ENCODE measurements at regions of chr10 and their contacts with region 1.

Region 1: GRCh38 chr10:72297968-72298773 is 24.4 kb downstream of the DDIT4 start:
- DNase-seq: peak; percentile 92
- H3K4me3 Mint-ChIP-seq: peak overlapping the region; percentile 78
- H3K27ac Mint-ChIP-seq: peak overlapping the region; percentile 100
- H3K4me1 Mint-ChIP-seq: peaks cover 54% of the 10 kb centered on the region
- H3K27me3 Mint-ChIP-seq: no peaks in the 10 kb centered on the region

Region 2: GRCh38 chr10:72162978-72163377 is 135.2 kb before region 1 on chr10:
- intact Hi-C with region 1: loop called (anchors 1 kb)
- DNase-seq: no peak
- H3K4me3 Mint-ChIP-seq: peak overlapping the region; percentile 57
- H3K27ac Mint-ChIP-seq: peak overlapping the region; percentile 80
- H3K4me1 Mint-ChIP-seq: peaks cover 27% of the 10 kb centered on the region
- H3K27me3 Mint-ChIP-seq: no peaks in the 10 kb centered on the region

Region 3: DNA sequence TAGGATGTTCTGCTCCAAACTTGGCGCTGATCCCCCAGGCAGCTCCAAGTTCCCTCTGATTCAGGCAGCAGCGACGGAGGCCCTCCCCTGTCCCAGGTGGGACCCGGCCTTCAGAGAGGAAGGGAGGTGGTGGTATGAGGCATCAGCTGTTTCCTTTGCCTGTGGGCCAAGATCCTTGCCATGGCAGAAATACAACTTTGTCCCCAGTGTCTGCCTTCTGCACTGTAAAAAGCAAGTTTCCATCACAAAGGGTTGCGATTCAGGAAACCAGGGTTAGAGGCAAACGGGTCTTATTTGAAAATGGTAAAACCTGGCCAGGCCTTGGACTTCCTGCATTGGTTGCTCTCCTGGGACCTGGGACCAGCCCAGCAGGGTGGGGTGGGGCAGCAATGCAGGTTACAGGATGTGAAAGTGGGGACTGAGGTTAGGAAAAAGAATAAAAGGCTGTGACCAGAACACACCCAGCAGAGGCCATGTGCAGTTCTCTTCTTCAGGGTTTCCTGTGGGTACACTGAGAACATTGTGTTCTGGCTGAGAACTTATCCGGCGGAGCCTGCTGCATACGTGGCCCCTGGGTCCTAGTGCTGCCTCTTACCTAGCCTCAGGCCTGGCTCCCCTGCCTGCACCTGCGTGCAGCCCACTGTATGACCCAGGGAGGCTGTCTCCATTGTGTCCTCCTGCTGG is 49.6 kb before region 1 on chr10:
- intact Hi-C with region 1: loop called (anchors 1 kb)
- DNase-seq: peak; percentile 75
- H3K4me3 Mint-ChIP-seq: peak overlapping the region; percentile 76
- H3K27ac Mint-ChIP-seq: peak overlapping the region; percentile 98
- H3K4me1 Mint-ChIP-seq: peaks cover 83% of the 10 kb centered on the region
- H3K27me3 Mint-ChIP-seq: no peaks in the 10 kb centered on the region

Region 4: GRCh38 chr10:72308320-72308987 is 10.3 kb after region 1 on chr10:
- intact Hi-C with region 1: loop called (anchors 1 kb)
- DNase-seq: no peak
- H3K4me3 Mint-ChIP-seq: peak overlapping the region; percentile 31
- H3K27ac Mint-ChIP-seq: peak overlapping the region; percentile 85
- H3K4me1 Mint-ChIP-seq: peaks cover 59% of the 10 kb centered on the region
- H3K27me3 Mint-ChIP-seq: no peaks in the 10 kb centered on the region

Region 5: DNA sequence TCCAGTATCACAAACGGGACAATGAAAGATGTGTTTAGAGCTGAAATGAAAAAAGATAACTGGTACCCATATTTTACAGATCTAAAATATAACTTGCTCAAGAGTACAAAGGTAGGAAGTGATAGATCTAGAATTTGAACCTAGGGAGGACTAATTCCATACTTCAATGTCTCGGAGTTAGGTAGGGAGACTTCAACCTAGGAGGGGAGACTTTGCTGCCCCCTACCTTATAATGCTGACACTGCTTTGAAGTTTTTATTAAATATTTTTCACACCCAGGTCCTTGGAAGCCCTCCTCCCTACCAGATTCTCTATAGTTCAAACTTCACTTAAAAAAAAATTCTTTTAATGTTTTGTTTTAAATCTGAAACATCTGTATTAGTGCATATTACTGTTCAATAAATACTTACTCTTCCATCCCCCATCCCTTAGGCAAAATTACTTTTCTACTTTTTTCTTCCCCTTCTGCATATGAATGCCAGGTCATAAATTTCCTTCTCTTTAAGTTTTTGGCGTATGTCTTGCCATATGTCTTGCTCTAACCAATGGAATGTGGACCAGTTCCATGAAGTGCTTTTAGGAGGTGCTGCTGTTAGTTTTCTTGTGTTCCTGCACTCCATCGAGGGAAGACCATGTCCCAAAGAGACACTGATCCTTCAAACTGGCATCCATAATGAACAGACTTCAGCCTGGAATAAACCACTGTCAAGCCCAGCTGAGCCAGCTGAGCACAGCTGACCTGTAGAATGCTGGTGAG is 269.9 kb after region 1 on chr10:
- intact Hi-C with region 1: loop called (anchors 5 kb)
- DNase-seq: no peak
- H3K4me3 Mint-ChIP-seq: no peak overlapping the region
- H3K27ac Mint-ChIP-seq: no peak overlapping the region
- H3K4me1 Mint-ChIP-seq: peaks cover 28% of the 10 kb centered on the region
- H3K27me3 Mint-ChIP-seq: no peaks in the 10 kb centered on the region

Measured in activated T-helper 1 cell treated with anti-CD3 and anti-CD28 coated beads, Interleukin-12 subunit alpha, Interleukin-12 subunit beta, Interleukin-2, Interleukin-4 antibody, amounts not matched to agents 30 ng/mL and 10 ng/mL and 1 ng/mL, durations not matched to agents 14 hours and 24 hours and 36 hours (primary cell).